ENCODE measurements at regions of chr5 and their contacts with region 1.

Region 1: GRCh38 chr5:55324815-55325418 is 17.1 kb downstream of the MTREX start:
- DNase-seq: no peak
- H3K4me3 ChIP-seq: no peak overlapping the region
- H3K27ac ChIP-seq: peak overlapping the region in 1 of 59 donors; percentile 12
- H3K27me3 ChIP-seq: no peaks in the 10 kb centered on the region
- CTCF ChIP-seq: peak; percentile 45 to 84 (median 72)

Region 2: DNA sequence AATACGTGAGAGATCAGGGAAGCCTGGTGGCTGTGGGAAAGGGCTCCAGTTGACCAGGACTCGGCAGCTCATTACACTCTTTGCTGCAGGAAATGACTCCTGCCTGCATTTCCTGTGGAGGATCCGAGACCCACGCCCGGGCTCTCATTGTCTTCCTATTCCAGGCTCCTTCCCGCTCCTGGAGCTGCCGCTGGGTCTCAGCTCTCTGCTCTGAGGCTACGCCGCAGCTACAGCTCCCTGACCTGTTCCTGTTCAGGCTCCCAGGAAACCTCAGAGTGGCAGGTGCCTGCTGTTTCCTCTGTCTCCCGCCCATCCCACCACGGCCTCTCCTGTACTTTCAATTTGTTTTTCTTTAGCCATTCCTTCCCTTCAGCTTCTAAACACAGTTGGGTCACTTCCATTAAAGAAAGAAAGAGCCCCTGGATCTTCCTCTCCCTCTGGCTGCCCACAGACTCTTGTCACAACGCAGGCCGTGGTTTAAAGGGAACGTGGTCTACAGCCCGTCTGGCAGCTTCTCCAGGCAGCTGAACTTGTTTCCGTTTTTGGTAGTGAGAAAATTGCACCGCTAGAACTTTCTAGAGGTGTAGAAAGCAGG is 598.4 kb after region 1 on chr5:
- intact Hi-C with region 1: loop called in 1 of 2 experiments (anchors 10 kb)
- DNase-seq: no peak
- H3K4me3 ChIP-seq: peak overlapping the region in 42 of 59 donors; percentile 1 to 55 (median 32)
- H3K27ac ChIP-seq: peak overlapping the region in 5 of 59 donors; percentile 21 to 44 (median 28)
- H3K27me3 ChIP-seq: peaks cover 0 to 5% (median 0%) of the 10 kb centered on the region in 45 donors
- CTCF ChIP-seq: no peak